Ovary (tissue), 10 donors: ENCODE measurements at regions of chr20 and their contacts with region 1.

Region 1: DNA sequence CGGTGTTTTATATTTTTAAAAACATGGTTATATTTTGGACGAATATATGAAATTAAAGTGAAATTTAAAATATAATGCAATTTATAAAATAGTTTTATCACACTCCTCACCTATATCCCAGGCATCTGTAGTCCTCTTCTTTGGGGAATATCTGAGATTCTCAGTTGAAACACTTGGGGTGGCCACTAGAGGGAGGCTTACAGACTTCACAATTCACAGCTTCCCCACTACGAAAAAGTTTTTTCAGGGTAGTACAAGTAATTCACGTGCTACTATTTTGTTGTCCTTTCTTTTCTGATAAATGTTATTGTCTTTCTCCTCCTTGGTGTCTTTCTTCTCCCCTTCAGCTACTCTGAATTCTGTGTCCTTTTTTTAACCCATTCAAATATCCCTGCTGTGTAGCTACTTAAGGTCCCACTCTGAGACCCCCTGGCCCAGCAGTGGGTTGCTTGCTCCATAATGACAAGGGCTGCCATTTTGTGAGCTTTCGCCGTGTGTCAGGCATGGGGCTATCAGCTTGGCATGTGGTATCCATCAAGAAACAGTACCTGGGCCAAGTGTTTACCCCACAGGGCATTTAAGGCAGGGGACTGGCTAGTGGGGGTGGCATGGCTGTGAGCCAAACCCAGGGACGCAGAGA is 43.6 kb upstream of the PHACTR3 start:
- DNase-seq: no peak
- H3K4me3 ChIP-seq: no peak overlapping the region
- H3K27ac ChIP-seq: no peak overlapping the region
- H3K4me1 ChIP-seq: no peaks in the 10 kb centered on the region
- H3K27me3 ChIP-seq: no peaks in the 10 kb centered on the region
- CTCF ChIP-seq: no peak
- EP300 ChIP-seq: no peak
- POLR2A ChIP-seq: no peak

Region 2: DNA sequence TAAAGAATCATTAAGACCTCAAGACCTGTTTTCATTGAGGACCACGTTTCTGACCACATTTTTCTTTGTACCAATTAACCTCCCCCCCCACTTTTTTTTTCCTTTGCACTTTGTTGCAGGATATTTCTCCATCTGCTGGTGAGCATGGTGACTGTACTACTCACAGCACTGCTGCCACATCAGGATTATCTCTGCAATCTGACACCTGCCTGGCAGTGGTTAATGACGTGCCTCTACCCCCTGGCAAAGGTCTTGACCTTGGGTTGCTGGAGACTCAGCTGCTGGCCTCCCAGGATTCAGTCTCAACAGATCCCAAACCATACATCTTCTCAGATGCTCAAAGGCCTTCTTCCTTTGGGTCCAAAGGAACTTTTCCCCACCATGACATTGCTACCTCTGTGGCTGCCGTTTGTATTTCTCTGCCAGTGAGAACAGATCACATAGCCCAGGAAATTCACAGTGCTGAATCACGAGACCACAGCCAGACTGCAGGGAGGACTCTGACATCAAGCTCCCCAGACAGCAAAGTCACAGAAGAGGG is 306.9 kb before region 1 on chr20:
- intact Hi-C with region 1: no loop called
- DNase-seq: no peak
- H3K4me3 ChIP-seq: no peak overlapping the region
- H3K27ac ChIP-seq: no peak overlapping the region
- H3K4me1 ChIP-seq: no peaks in the 10 kb centered on the region
- H3K27me3 ChIP-seq: no peaks in the 10 kb centered on the region
- CTCF ChIP-seq: no peak
- EP300 ChIP-seq: no peak
- POLR2A ChIP-seq: no peak

Region 3: GRCh38 chr20:59735917-59736316 is 175.2 kb after region 1 on chr20:
- intact Hi-C with region 1: no loop called
- DNase-seq: no peak
- H3K4me3 ChIP-seq: no peak overlapping the region
- H3K27ac ChIP-seq: no peak overlapping the region
- H3K4me1 ChIP-seq: no peaks in the 10 kb centered on the region
- H3K27me3 ChIP-seq: no peaks in the 10 kb centered on the region
- CTCF ChIP-seq: no peak
- EP300 ChIP-seq: no peak
- POLR2A ChIP-seq: no peak

Region 4: DNA sequence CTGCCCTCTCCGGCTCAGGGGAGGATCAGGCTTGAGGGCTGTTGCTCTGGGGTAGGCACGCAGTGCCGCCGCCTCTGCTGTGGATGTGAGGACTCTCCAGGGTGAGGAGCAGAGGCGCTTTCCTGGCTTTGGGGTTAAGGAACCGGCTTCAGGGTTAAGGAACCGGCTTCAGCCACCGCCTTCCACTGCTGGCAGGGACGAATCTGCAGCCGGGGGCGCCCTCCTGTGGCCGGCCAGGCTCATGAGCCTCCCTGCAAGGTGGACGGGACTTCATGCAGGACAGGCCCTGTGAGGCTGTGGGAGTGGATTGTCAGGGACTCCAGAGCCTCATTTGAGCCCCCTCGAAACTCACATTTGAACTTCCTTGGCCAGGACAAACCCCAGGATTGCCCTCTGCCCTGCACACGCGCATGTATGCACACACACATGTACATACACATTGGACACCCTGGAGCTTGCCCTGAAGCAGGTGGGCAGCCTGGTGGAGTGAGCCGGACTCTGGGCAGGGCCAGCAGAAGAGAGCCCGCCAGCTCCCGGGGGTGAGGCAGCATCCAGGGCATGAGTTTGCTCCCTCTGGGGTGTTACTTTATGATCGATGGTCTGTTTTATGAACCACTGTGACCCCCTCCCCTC is 190.5 kb after region 1 on chr20:
- intact Hi-C with region 1: loop called in 1 of 4 experiments (anchors 10 kb)
- DNase-seq: peak; percentile 44 to 80 (median 70)
- H3K4me3 ChIP-seq: no peak overlapping the region
- H3K27ac ChIP-seq: no peak overlapping the region
- H3K4me1 ChIP-seq: peaks cover 5% of the 10 kb centered on the region
- H3K27me3 ChIP-seq: no peaks in the 10 kb centered on the region
- CTCF ChIP-seq: peak in 2 of 3 donors; percentile 44 to 71
- EP300 ChIP-seq: no peak
- POLR2A ChIP-seq: no peak

Region 5: DNA sequence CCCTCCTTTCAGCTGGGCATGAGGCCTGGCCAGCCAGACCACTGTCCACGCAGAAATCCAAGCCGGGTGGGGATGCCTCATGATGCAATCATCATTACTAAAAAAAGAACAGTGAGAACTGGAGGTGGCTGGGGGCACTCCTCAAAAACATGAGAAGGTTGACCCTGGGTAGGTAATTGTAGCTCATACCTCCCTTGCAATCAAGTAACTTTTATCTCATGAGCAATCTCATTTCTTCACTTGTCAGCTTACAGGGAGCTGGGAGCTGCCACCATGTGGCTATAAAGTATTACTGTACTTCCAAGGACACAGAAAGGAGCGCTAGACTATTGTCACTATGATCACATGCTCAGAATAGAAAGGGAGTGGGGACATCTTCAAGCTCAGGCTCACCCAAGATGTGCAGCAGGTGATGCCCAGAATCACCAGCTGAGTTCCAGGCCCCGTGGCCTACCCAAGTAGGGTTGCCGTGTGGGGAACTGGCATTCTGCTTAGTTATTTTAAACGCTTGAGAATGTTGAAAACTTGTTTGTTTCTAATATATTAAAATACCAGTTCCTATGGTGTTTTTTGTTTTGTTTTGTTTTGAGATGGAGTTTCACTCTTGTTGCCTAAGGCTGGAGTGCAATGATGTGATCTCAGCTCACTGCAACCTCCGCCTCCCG is 394.6 kb after region 1 on chr20:
- intact Hi-C with region 1: no loop called
- DNase-seq: no peak
- H3K4me3 ChIP-seq: no peak overlapping the region
- H3K27ac ChIP-seq: no peak overlapping the region
- H3K4me1 ChIP-seq: no peaks in the 10 kb centered on the region
- H3K27me3 ChIP-seq: no peaks in the 10 kb centered on the region
- CTCF ChIP-seq: no peak
- EP300 ChIP-seq: no peak
- POLR2A ChIP-seq: no peak